Prostate gland (tissue), 2 donors: ENCODE measurements at regions of chr16 and their contacts with region 1.

Region 1: GRCh38 chr16:10787304-10787703 is 31.3 kb downstream of the TVP23A start:
- DNase-seq: no peak
- H3K4me3 ChIP-seq: no peak overlapping the region
- H3K27ac ChIP-seq: no peak overlapping the region
- H3K4me1 ChIP-seq: no peaks in the 10 kb centered on the region
- H3K27me3 ChIP-seq: no peaks in the 10 kb centered on the region
- CTCF ChIP-seq: no peak
- POLR2A ChIP-seq: no peak

Region 2: GRCh38 chr16:10752843-10753523 is 34.3 kb before region 1 on chr16:
- intact Hi-C with region 1: no loop called
- DNase-seq: no peak
- H3K4me3 ChIP-seq: no peak overlapping the region
- H3K27ac ChIP-seq: no peak overlapping the region
- H3K4me1 ChIP-seq: no peaks in the 10 kb centered on the region
- H3K27me3 ChIP-seq: no peaks in the 10 kb centered on the region
- CTCF ChIP-seq: no peak
- POLR2A ChIP-seq: no peak

Region 3: DNA sequence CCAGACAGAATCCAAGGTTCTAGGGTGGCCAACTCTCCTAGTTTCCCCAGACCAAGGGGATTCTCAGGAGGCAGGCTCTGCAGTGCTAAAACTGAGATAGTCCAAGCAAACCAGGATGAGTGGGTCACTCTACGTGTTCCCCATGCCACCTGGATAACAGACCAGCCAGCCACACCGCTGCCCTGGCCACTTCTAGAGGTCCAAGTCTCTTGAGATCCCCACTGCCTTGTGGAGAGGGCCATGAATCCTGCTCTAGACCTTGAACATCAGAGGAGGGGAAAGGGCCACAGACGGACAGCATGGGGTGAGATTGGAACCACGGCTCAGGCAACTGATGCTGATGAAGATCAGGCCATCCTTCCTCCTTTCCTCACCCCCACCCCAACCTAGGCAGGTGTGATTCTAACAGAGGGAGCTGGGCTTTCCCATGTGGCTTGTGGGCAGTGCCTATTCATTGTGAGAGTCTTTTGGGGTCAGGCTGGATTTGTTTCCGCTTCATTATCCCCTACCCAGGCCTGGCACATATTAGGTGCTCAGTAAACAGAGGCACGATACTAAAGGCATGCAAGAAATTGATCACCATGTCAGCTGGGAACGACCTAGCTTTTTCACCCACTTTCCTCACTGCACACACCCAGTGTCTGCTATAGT is 48.1 kb after region 1 on chr16:
- intact Hi-C with region 1: loop called (anchors 5 kb)
- DNase-seq: no peak
- H3K4me3 ChIP-seq: no peak overlapping the region
- H3K27ac ChIP-seq: no peak overlapping the region
- H3K4me1 ChIP-seq: no peaks in the 10 kb centered on the region
- H3K27me3 ChIP-seq: no peaks in the 10 kb centered on the region
- CTCF ChIP-seq: no peak
- POLR2A ChIP-seq: no peak